Colonic mucosa (tissue), 4 donors: ENCODE measurements at regions of chr11 and their contacts with region 1.

Region 1: DNA sequence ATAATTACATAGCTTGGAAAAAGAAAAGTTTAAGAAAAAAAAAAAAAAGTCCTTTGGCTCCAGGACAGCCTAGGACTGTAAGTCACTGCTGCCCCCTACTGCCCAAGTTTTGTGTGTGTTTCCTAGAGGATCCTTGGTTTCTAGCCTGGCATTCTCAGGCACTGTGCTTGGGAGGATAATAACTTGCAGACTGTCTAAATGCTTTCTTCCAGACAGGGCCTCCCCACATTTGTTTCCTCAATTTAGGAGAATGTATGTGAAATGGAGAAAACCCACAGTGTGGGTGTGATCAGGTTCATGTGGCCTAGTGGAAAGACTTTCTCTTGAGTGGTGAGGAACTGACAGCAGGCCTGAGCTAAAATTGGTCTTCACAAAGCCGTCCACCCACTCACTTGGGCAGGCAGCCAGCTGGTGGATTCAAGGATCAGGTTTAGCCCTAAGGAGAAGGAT is 191.0 kb downstream of the NAV2 start:
- DNase-seq: peak; percentile 82
- H3K4me3 ChIP-seq: no peak overlapping the region
- H3K27ac ChIP-seq: no peak overlapping the region
- H3K4me1 ChIP-seq: no peaks in the 10 kb centered on the region
- H3K27me3 ChIP-seq: no peaks in the 10 kb centered on the region
- CTCF ChIP-seq: peak; percentile 83

Region 2: DNA sequence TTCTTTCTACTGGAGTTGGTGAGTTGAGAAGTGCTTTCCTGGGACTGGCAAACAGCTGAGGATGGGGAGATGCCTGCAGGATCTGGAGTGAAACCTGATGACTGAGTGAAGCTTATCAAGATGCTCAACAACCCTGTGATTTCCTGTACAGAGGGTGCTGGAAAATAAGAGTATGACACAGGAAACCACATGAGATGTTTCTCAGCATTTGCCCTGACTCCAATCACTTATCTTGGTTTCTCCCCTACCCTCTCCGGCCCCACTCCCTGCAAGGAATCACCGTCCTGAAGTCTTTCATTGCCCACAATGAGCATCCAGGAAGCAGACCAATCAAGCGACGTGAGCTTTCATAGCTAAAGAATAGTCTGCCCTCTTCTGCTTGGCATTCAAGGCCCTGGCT is 843.0 kb before region 1 on chr11 and contains the start of gene MRGPRX2:
- intact Hi-C with region 1: loop called (anchors 10 kb)
- DNase-seq: no peak
- H3K4me3 ChIP-seq: no peak within 1 kb of the TSS
- H3K27ac ChIP-seq: no peak within 1 kb of the TSS
- H3K4me1 ChIP-seq: no peaks in the 10 kb centered on the region
- H3K27me3 ChIP-seq: no peaks in the 10 kb centered on the region
- CTCF ChIP-seq: no peak
- total RNA-seq, gene MRGPRX2: not detected

Region 3: DNA sequence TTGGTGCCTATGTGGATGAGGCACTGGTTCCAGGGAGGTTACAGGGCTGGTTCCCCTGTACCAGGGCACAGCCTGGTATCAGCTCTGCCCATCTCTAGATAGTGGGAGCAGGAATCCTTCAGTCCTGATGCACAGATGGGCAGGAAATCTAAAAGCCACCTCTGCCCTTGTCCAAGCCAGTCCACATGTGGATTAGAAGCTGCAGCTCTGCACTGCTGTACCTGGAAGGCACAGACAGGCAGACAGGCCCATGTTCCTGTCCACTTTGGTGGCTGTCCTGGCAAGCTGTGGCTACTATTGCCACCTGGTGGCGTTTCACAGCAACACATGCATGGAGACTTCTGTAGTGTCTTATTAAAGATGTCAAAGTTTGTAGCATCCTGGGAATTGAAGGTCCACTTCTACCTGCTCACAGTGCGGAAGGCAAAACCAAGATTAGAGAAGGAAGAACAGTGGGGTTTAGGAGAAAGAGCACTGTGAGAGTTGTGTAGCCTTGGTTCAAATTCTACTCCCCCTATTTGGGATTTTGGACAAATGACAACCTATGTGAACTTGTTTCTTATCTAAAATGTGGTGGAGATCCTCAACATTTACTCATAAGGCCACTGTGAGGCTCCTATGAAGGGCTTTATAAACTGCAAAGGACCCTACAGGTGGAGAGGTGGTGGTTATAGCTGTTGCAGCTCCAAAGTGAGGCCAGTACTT is 160.9 kb before region 1 on chr11:
- intact Hi-C with region 1: loop called (anchors 2 kb)
- DNase-seq: peak; percentile 80
- H3K4me3 ChIP-seq: no peak overlapping the region
- H3K27ac ChIP-seq: no peak overlapping the region
- H3K4me1 ChIP-seq: no peaks in the 10 kb centered on the region
- H3K27me3 ChIP-seq: no peaks in the 10 kb centered on the region
- CTCF ChIP-seq: peak; percentile 86

Region 4: GRCh38 chr11:20022363-20023081 is 118.9 kb after region 1 on chr11:
- intact Hi-C with region 1: no loop called
- DNase-seq: no peak
- H3K4me3 ChIP-seq: no peak overlapping the region
- H3K27ac ChIP-seq: no peak overlapping the region
- H3K4me1 ChIP-seq: no peaks in the 10 kb centered on the region
- H3K27me3 ChIP-seq: no peaks in the 10 kb centered on the region
- CTCF ChIP-seq: no peak